HCT116 (cell line): ENCODE measurements at regions of chr10 and their contacts with region 1.

Region 1: GRCh38 chr10:79068562-79069324 is at the start of gene ZMIZ1:
- DNase-seq: peak; percentile 83
- ATAC-seq: peak; percentile 69
- H3K4me3 ChIP-seq: peak within 1 kb of the TSS; percentile 84 to 85
- H3K27ac ChIP-seq: peak within 1 kb of the TSS; percentile 97
- H3K4me1 ChIP-seq: peaks cover 32 to 58% of the 10 kb centered on the region in 2 experiments
- H3K27me3 ChIP-seq: no peaks in the 10 kb centered on the region
- CTCF ChIP-seq: 0 out of 6 replicates have a peak, but pooled peaks of 1 of the 3 experiments have one; percentile 11
- POLR2A ChIP-seq: peak; percentile 82
- RAD21 ChIP-seq: 0 out of 2 replicates have a peak, but pooled peaks have one; percentile 36
- total RNA-seq, gene ZMIZ1: 28.4 TPM

Region 2: DNA sequence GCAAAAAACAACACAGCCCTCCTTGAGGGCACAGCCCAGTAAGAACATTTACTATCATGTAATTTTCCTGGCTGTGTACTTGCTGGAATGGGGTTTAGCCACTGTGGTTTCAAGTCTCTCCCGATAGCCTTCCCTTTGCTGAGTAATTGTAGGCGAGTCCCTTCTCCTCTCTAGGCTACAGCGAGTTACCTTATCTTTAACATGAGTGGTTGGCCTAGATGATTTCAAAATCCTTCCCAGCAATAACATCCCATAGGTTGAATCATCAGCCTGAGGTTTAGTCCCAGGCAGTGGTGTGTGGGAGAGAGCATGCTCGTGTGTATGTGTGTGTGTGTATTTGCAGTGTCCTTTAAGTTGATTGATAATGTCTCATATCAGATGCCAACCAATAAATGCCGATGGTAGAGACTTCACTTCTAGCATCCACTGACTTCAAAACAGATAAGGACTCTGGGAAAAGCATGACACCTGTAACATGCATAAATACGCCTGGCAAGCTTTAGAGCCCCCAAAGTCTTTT is 142.9 kb before region 1 on chr10:
- CTCF ChIA-PET with region 1: no interaction called
- POLR2A ChIA-PET with region 1: no interaction called
- RAD21 ChIA-PET with region 1: no interaction called
- intact Hi-C with region 1: loop called (anchors 5 kb)
- DNase-seq: no peak
- ATAC-seq: no peak
- H3K4me3 ChIP-seq: no peak overlapping the region
- H3K27ac ChIP-seq: no peak overlapping the region
- H3K4me1 ChIP-seq: peaks cover 13 to 44% of the 10 kb centered on the region in 2 experiments
- H3K27me3 ChIP-seq: no peaks in the 10 kb centered on the region
- CTCF ChIP-seq: no peak
- POLR2A ChIP-seq: no peak
- RAD21 ChIP-seq: no peak

Region 3: DNA sequence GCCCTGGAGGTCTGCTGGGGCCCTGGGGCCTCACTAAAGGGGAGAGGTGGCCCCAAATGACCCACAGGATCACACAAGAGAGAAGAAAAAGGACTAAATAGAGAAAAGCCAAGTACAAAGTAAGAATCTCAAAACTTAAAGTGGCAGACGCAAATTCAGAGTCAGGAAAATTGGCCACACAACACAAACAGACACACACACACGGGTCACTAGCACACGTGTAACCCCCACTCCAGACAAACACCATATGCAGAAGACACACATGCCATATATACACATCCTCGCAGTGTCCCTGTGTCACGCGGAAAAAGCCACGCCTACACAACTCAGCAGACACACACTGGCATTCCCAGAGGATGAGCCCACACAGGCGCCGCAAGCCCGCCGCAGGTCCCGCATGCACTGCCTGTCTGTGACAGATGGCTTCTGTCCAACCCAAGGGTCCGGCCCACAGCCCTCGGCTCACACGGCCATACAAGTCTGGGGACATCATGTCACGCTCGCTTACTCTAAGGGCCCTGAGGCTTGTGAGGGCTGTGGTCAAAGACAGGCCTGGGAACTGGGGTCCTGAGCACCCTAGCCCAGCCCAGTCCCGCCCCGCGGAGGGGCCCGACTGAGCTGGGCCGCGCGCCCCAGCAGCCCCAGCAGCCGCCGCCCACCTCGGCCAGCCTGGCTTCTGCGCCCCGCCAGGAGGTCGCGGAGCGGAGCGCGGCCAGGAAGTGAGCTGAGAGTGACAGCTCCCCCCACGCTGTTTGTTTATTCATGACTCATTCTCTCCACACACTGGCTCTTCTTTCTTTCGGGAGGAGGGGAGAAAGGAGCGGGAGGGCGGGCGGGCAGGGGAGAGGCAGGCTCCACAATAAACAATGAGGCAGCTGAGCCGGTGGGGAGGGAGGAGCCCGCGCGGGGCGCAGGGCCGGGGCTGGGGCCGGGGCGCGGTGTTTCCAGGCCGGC is 95.5 kb before region 1 on chr10:
- CTCF ChIA-PET with region 1: interaction called, 5 read pairs
- POLR2A ChIA-PET with region 1: no interaction called
- RAD21 ChIA-PET with region 1: interaction called in 1 of 2 experiments, 4 read pairs
- intact Hi-C with region 1: loop called (anchors 2 kb)
- DNase-seq: peak; percentile 84
- ATAC-seq: peak; percentile 64
- H3K4me3 ChIP-seq: peak overlapping the region; percentile 42 to 61
- H3K27ac ChIP-seq: peak overlapping the region; percentile 96
- H3K4me1 ChIP-seq: peaks cover 30 to 48% of the 10 kb centered on the region in 2 experiments
- H3K27me3 ChIP-seq: no peaks in the 10 kb centered on the region
- CTCF ChIP-seq: no peak
- POLR2A ChIP-seq: no peak
- RAD21 ChIP-seq: no peak

Region 4: DNA sequence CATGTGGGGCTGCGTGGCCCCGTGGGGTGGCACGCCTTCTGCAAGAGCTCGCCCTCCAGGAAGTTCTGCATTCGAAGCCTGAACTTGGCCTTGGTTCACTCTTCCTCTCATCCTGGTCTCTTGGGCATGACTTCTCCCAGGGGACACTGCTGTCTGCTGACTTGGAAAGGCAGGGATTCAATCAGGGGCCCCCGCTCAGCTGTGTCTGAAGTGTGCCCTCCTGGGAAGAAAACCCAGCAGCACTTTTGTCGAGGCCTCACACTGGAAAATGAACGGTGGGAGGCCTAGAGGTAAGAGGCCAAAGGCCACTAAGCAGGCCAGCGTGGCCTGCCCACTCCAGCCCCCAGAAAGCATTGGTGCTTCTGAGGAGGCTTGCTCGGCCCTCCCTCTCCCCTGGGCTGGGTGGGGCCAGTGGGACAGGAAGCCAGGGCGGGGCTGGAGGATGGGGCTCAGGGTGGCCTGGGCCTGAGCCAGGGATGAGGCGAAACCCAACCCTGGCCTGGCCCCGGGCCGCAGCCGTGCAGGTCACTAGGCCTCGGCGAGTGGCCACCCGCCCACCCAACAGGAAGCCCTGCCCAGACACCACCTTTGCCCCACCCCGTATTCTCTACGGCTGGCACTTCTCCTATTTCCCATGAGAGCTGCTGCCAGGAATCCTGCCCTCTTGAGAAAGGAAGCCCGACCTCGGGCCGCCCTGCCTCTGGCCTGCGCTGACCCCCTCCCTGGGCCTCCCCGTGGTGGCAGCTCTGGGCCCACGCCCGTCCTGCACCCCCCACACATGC is 81.1 kb after region 1 on chr10:
- CTCF ChIA-PET with region 1: no interaction called
- POLR2A ChIA-PET with region 1: no interaction called
- RAD21 ChIA-PET with region 1: no interaction called
- intact Hi-C with region 1: loop called (anchors 2 kb)
- DNase-seq: peak; percentile 48
- ATAC-seq: peak; percentile 74
- H3K4me3 ChIP-seq: peak overlapping the region in 1 of 2 experiments; percentile 32; a peak in 2 of 4 replicates
- H3K27ac ChIP-seq: peak overlapping the region; percentile 94
- H3K4me1 ChIP-seq: peaks cover 54 to 93% of the 10 kb centered on the region in 2 experiments
- H3K27me3 ChIP-seq: no peaks in the 10 kb centered on the region
- CTCF ChIP-seq: no peak
- POLR2A ChIP-seq: no peak
- RAD21 ChIP-seq: no peak